ENCODE measurements at regions of chr19 and their contacts with region 1.

Region 1: DNA sequence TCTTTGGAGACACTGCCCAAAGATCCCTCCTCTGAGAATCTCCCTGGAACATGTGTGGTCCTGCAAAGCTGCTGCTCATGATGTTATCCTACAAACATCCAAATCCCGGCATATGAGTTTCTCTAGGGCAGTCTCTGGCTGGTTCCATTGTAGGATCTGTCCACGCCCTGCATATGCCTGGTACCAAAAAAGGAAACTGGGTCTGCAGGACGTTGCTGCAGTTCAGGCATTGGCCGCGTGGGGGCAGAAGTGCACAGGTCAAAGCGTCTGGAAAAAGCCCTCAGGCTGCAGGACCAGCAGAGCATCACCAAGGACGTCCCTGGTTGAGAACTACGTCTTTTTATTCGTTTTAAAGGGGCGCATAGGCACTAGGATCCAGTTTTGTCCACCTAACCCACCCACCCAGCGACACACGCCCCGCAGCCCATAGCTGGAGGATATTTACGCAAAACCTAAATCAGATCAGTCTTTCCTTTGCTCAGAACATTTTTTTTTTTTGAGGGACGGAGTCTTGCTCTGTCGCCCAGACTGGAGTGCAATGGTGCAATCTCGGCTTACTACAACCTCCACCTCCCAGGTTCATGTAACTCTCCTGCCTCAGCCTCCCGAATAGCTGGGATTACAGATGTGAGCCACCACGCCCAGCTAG is 12.9 kb upstream of the ZNF564 start:
- DNase-seq: peak; percentile 95
- H3K4me3 Mint-ChIP-seq: no peak overlapping the region
- H3K27ac Mint-ChIP-seq: peak overlapping the region; percentile 19
- H3K4me1 Mint-ChIP-seq: peaks cover 5% of the 10 kb centered on the region
- H3K27me3 Mint-ChIP-seq: no peaks in the 10 kb centered on the region

Region 2: DNA sequence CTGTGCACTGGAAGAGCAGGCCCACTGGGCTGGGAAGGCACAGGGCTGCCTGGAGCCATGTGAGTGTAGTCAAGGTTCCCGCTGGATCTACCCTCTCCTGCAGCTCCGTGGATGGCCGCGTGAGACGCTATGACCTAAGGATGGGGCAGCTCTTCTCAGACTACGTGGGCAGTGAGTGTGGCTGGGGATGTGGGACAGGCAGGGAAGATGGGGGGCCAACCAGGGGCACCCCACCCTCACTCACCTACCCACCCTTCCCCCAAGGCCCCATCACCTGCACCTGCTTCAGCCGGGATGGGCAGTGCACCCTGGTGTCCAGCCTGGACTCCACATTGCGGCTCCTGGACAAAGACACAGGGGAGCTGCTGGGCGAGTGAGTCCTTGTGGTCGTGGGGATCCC is 108.6 kb after region 1 on chr19:
- CTCF ChIA-PET with region 1: interaction called, 25 read pairs
- POLR2A ChIA-PET with region 1: interaction called, 5 read pairs
- intact Hi-C with region 1: loop called (anchors 1 kb)
- DNase-seq: no peak
- H3K4me3 Mint-ChIP-seq: no peak overlapping the region
- H3K27ac Mint-ChIP-seq: no peak overlapping the region
- H3K4me1 Mint-ChIP-seq: peaks cover 34% of the 10 kb centered on the region
- H3K27me3 Mint-ChIP-seq: no peaks in the 10 kb centered on the region

Measured in activated CD4-positive, alpha-beta memory T cell treated with anti-CD3 and anti-CD28 coated beads for 36 hours (primary cell).